ENCODE measurements at regions of chr5 and their contacts with region 1.

Region 1: GRCh38 chr5:9588254-9588653 is 41.9 kb downstream of the TAS2R1 start:
- DNase-seq: no peak
- H3K4me3 ChIP-seq: no peak overlapping the region
- H3K27ac ChIP-seq: no peak overlapping the region
- H3K27me3 ChIP-seq: no peaks in the 10 kb centered on the region
- CTCF ChIP-seq: no peak

Region 2: DNA sequence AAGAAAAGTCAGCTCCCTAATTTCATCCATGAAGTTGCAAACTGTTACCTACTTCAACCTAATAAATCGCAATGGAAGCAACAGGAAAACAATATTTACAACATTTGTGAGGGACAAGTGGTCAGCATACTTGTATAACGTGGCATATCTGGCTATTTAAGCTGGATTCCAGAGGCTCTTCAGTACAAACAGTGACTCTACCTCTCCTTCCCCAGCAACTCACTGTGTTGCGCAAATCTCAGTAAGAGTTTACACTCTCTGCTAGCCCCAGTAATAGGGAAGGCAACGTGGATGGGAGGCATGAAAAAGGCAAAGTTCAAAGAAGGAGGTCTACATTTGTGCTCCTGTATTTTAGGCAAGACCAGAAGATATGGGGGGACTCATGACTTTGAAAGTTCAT is 23.5 kb before region 1 on chr5:
- intact Hi-C with region 1: loop called in 1 of 2 experiments (anchors 1 kb)
- DNase-seq: no peak
- H3K4me3 ChIP-seq: no peak overlapping the region
- H3K27ac ChIP-seq: no peak overlapping the region
- H3K27me3 ChIP-seq: no peaks in the 10 kb centered on the region
- CTCF ChIP-seq: no peak